ENCODE measurements at regions of chr15 and their contacts with region 1.

Region 1: GRCh38 chr15:25268166-25268565 is 170.7 kb downstream of the UBE3A start:
- DNase-seq: no peak
- ATAC-seq: no peak
- H3K4me3 ChIP-seq: no peak overlapping the region
- H3K27ac ChIP-seq: no peak overlapping the region
- H3K4me1 ChIP-seq: no peaks in the 10 kb centered on the region
- H3K27me3 ChIP-seq: no peaks in the 10 kb centered on the region
- CTCF ChIP-seq: peak in 1 of 9 donors; percentile 13

Region 2: GRCh38 chr15:25094519-25094918 is 173.6 kb before region 1 on chr15:
- intact Hi-C with region 1: no loop called
- DNase-seq: no peak
- ATAC-seq: no peak
- H3K4me3 ChIP-seq: no peak overlapping the region
- H3K27ac ChIP-seq: no peak overlapping the region
- H3K4me1 ChIP-seq: peaks cover 0 to 6% (median 0%) of the 10 kb centered on the region in 9 donors
- H3K27me3 ChIP-seq: no peaks in the 10 kb centered on the region
- CTCF ChIP-seq: no peak

Region 3: DNA sequence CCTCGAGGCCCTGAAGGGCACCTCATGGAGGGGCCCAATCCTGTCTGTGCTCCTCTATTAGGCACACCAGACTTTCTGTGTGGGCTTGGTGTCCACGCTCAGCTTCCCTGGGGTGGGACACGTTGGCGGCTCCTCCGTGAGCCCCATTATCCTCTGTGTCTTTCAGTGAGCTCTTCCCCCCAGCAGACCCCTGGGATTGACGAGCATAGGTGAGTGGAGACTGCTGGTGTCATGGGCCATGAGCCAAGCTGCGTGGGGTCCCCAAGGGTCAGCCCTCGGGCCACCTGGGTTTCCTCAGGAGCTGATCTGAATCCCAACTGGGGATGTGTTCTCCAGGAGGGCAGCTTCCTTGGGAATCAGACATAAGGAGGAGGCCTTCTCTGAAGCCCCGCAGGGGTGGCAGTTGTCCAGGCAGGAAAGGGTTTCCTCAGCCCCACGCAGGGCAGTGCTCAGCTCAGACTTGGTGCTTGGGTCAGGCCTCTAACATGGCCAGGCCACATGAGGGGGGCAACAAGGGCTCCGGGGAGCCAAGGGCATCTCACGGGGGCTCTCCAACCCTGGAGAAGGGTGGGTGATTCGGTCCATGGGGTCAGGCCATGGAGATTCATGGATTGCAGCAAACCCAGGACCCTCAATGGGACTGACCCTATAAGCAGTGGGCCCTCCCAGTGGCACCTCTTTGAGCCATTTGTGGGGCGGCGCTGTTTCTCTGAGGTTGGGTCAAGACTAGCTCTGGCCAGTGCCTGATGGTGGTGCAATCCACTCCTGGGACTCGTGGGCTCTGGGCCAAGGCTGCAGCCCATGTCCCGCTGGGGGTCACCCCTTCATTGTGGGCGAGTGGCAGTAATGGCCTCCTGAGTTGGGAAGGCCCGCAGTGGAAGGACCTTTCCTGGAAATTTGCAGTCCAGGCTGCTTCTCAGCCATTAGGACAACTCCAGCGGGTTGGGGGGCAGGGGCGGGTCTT is 90.9 kb before region 1 on chr15:
- intact Hi-C with region 1: no loop called
- DNase-seq: peak; percentile 2
- ATAC-seq: no peak
- H3K4me3 ChIP-seq: no peak overlapping the region
- H3K27ac ChIP-seq: no peak overlapping the region
- H3K4me1 ChIP-seq: no peaks in the 10 kb centered on the region
- H3K27me3 ChIP-seq: no peaks in the 10 kb centered on the region
- CTCF ChIP-seq: no peak

Region 4: GRCh38 chr15:25333049-25333448 is 64.9 kb after region 1 on chr15:
- intact Hi-C with region 1: loop called in 1 of 10 experiments (anchors 10 kb)
- DNase-seq: no peak
- ATAC-seq: no peak
- H3K4me3 ChIP-seq: no peak overlapping the region
- H3K27ac ChIP-seq: no peak overlapping the region
- H3K4me1 ChIP-seq: no peaks in the 10 kb centered on the region
- H3K27me3 ChIP-seq: no peaks in the 10 kb centered on the region
- CTCF ChIP-seq: no peak

Measured in heart right ventricle (tissue), 16 donors.